ENCODE measurements at regions of chr11 and their contacts with region 1.

Region 1: GRCh38 chr11:86671682-86672621 is at the start of gene ME3:
- DNase-seq: peak in 1 of 2 donors; percentile 85
- H3K4me3 ChIP-seq: peak within 1 kb of the TSS; percentile 81 to 95
- H3K27ac ChIP-seq: peak within 1 kb of the TSS; percentile 93 to 94
- H3K4me1 ChIP-seq: peaks cover 0 to 22% of the 10 kb centered on the region in 2 donors
- H3K27me3 ChIP-seq: no peaks in the 10 kb centered on the region
- CTCF ChIP-seq: peak in 1 of 3 experiments; percentile 11
- total RNA-seq, gene ME3: 34.2 TPM

Region 2: DNA sequence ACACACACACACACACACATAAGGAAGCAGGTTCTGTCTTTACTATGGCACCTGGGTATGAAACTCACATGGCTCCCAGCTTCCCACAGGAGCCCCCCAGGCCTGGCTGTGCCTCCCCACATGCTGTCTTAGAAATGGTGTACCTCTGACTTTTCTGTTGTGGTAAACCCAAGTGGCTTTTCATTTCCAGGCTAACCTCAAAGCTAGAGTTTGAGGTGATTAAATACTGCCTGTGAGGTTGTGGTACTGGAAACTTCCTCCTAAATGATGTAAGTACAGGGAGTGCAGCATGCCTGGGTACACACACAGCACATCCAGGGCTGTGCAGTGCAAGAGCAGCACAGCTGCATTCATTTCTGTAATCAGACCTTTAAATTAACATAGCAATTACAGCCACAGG is 34.0 kb before region 1 on chr11:
- intact Hi-C with region 1: loop called (anchors 2 kb)
- DNase-seq: no peak
- H3K4me3 ChIP-seq: no peak overlapping the region
- H3K27ac ChIP-seq: no peak overlapping the region
- H3K4me1 ChIP-seq: peaks cover 0 to 10% of the 10 kb centered on the region in 2 donors
- H3K27me3 ChIP-seq: no peaks in the 10 kb centered on the region
- CTCF ChIP-seq: no peak

Region 3: GRCh38 chr11:86688398-86689179 is 16.6 kb after region 1 on chr11:
- intact Hi-C with region 1: no loop called
- DNase-seq: peak; percentile 50 to 74
- H3K4me3 ChIP-seq: no peak overlapping the region
- H3K27ac ChIP-seq: peak overlapping the region; percentile 56 to 79
- H3K4me1 ChIP-seq: peaks cover 4 to 14% of the 10 kb centered on the region in 2 donors
- H3K27me3 ChIP-seq: no peaks in the 10 kb centered on the region
- CTCF ChIP-seq: no peak

Region 4: GRCh38 chr11:86802601-86803051 is 130.7 kb after region 1 on chr11:
- intact Hi-C with region 1: loop called (anchors 2 kb)
- DNase-seq: no peak
- H3K4me3 ChIP-seq: peak overlapping the region in 1 of 2 donors; percentile 67
- H3K27ac ChIP-seq: peak overlapping the region; percentile 67 to 76
- H3K4me1 ChIP-seq: peaks cover 0 to 16% of the 10 kb centered on the region in 2 donors
- H3K27me3 ChIP-seq: no peaks in the 10 kb centered on the region
- CTCF ChIP-seq: peak in 2 of 3 experiments; percentile 33 to 57